A673 (cell line): ENCODE measurements at regions of chr16 and their contacts with region 1.

Region 1: DNA sequence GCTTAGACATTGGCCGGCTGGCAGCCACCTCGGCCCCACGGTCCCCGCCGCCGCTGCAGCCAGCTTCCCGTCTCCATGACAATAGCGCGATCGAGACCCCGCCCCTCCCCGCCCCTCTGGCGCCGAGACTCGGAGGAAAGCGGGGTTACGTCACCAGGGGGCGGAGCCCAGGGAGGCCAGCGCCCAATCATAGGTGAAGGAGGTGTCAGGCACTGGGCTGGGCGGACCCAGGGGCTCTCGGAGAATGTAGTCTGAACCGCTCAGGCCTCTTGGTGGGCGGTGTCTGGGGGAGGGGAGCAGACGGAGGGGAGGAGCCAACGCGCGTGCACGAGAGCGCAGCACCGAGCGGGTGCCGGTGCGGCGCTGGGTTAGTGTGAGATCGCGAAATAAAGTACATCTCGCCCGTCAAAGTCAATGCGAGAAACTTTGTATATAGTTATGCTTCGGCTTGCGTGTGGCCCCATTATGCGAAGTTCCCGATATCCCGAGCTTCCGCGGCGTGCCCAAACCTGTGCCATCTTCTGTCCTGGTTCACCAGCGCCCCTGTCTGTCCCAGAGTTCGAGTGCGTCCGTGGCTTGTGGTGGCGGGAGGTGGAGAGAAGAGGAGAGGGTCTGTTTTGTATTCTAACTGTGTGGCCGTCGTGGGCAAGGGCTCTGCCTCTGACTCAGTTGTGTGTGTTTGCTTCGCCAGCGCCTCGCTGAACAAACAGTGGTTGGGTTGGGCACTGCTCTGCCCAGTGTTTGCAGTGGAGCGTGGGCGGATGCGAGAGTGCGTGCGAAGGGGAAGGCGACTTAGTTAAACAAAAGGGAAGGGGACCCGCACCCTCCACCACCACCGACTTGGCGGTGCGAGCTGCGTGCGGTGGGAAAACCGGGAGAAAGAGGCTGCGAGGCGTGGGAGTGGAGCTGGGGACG is 1.3 kb upstream of the IRX5 start:
- DNase-seq: peak; percentile 99
- H3K4me3 ChIP-seq: peak overlapping the region; percentile 88
- H3K27ac ChIP-seq: peak overlapping the region; percentile 89
- H3K4me1 ChIP-seq: peaks cover 24% of the 10 kb centered on the region
- H3K27me3 ChIP-seq: no peaks in the 10 kb centered on the region
- CTCF ChIP-seq: peak; percentile 41

Region 2: GRCh38 chr16:53703590-53704444 is 1225.5 kb before region 1 on chr16 and contains the starts of genes FTO and RPGRIP1L:
- CTCF ChIA-PET with region 1: no interaction called
- POLR2A ChIA-PET with region 1: no interaction called
- intact Hi-C with region 1: loop called (anchors 10 kb)
- DNase-seq: peak; percentile 99
- H3K4me3 ChIP-seq: peak within 1 kb of the TSS; percentile 61
- H3K27ac ChIP-seq: peak within 1 kb of the TSS; percentile 43
- H3K4me1 ChIP-seq: peaks cover 15% of the 10 kb centered on the region
- H3K27me3 ChIP-seq: no peaks in the 10 kb centered on the region
- CTCF ChIP-seq: no peak; the same call in 1 of the 2 replicates
- total RNA-seq, gene FTO: 72.7 and 73.4 TPM in 2 replicates
- total RNA-seq, gene RPGRIP1L: 18.3 and 19.8 TPM in 2 replicates

Region 3: GRCh38 chr16:53773150-53773846 is 1156.0 kb before region 1 on chr16:
- CTCF ChIA-PET with region 1: no interaction called
- POLR2A ChIA-PET with region 1: no interaction called
- intact Hi-C with region 1: loop called (anchors 5 kb)
- DNase-seq: peak; percentile 86
- H3K4me3 ChIP-seq: no peak overlapping the region
- H3K27ac ChIP-seq: no peak overlapping the region
- H3K4me1 ChIP-seq: peaks cover 42% of the 10 kb centered on the region
- H3K27me3 ChIP-seq: no peaks in the 10 kb centered on the region
- CTCF ChIP-seq: peak; percentile 77

Region 4: DNA sequence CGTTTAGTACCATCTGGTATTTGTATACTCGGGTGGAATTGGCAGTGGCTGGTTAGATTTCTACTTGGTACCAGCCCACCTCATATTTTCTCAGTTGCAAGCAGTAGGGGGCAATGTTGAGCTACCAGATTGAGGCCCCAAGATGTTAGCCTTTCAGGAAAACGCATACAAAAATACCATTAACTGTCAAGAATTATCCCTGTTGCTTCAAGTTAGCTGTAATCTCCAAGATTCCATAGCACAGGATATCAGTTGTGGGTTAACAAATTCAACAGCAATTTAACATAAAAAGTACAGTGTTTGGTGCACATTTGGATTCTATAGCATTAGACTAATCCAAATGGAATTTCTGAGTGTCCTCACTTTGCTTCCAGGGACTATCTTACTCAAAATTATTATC is 1037.2 kb before region 1 on chr16:
- CTCF ChIA-PET with region 1: no interaction called
- POLR2A ChIA-PET with region 1: no interaction called
- intact Hi-C with region 1: loop called (anchors 10 kb)
- DNase-seq: peak; percentile 77
- H3K4me3 ChIP-seq: no peak overlapping the region
- H3K27ac ChIP-seq: no peak overlapping the region
- H3K4me1 ChIP-seq: peaks cover 42% of the 10 kb centered on the region
- H3K27me3 ChIP-seq: no peaks in the 10 kb centered on the region
- CTCF ChIP-seq: peak; percentile 85

Region 5: GRCh38 chr16:54286090-54286993 is 643.0 kb before region 1 on chr16 and contains the start of gene IRX3:
- CTCF ChIA-PET with region 1: no interaction called
- POLR2A ChIA-PET with region 1: no interaction called
- intact Hi-C with region 1: loop called (anchors 2 kb)
- DNase-seq: peak; percentile 97
- H3K4me3 ChIP-seq: peak within 1 kb of the TSS; percentile 74
- H3K27ac ChIP-seq: peak within 1 kb of the TSS; percentile 94
- H3K4me1 ChIP-seq: no peaks in the 10 kb centered on the region
- H3K27me3 ChIP-seq: no peaks in the 10 kb centered on the region
- CTCF ChIP-seq: no peak
- total RNA-seq, gene IRX3: 22.7 and 22.9 TPM in 2 replicates

Region 6: GRCh38 chr16:54459509-54460262 is 469.7 kb before region 1 on chr16:
- CTCF ChIA-PET with region 1: no interaction called
- POLR2A ChIA-PET with region 1: no interaction called
- intact Hi-C with region 1: loop called (anchors 10 kb)
- DNase-seq: peak; percentile 37
- H3K4me3 ChIP-seq: no peak overlapping the region
- H3K27ac ChIP-seq: peak overlapping the region; percentile 77
- H3K4me1 ChIP-seq: peaks cover 55% of the 10 kb centered on the region
- H3K27me3 ChIP-seq: no peaks in the 10 kb centered on the region
- CTCF ChIP-seq: no peak

Region 7: DNA sequence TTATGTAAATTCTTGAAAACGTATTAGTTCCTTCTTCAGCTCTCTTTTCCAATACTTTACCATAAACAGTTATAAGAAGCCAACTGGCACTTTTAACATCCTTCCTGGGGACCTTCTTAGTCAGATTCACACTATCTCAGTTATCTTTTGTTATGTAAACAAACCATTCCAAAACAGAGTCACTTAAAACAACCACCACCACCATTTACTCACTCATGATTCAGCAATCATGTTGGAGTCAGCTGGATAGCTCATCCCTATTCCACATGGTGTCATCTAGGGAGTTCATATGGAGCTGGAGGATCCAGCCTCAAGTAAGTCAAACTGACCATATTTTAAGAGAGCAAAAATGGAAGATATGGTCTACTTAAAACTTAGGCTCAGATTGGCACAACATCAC is 402.4 kb before region 1 on chr16:
- CTCF ChIA-PET with region 1: no interaction called
- POLR2A ChIA-PET with region 1: no interaction called
- intact Hi-C with region 1: no loop called
- DNase-seq: no peak
- H3K4me3 ChIP-seq: no peak overlapping the region
- H3K27ac ChIP-seq: no peak overlapping the region
- H3K4me1 ChIP-seq: no peaks in the 10 kb centered on the region
- H3K27me3 ChIP-seq: no peaks in the 10 kb centered on the region
- CTCF ChIP-seq: no peak

Region 8: GRCh38 chr16:54633943-54634362 is 295.4 kb before region 1 on chr16:
- CTCF ChIA-PET with region 1: no interaction called
- POLR2A ChIA-PET with region 1: no interaction called
- intact Hi-C with region 1: loop called (anchors 10 kb)
- DNase-seq: peak; percentile 56
- H3K4me3 ChIP-seq: no peak overlapping the region
- H3K27ac ChIP-seq: no peak overlapping the region
- H3K4me1 ChIP-seq: peaks cover 12% of the 10 kb centered on the region
- H3K27me3 ChIP-seq: no peaks in the 10 kb centered on the region
- CTCF ChIP-seq: peak; percentile 76